ENCODE measurements at regions of chr19 and their contacts with region 1.

Region 1: GRCh38 chr19:13707915-13708314 is 56.4 kb upstream of the MRI1 start:
- DNase-seq: no peak
- H3K4me3 Mint-ChIP-seq: no peak overlapping the region
- H3K27ac Mint-ChIP-seq: no peak overlapping the region
- H3K4me1 Mint-ChIP-seq: peaks cover 4% of the 10 kb centered on the region
- H3K27me3 Mint-ChIP-seq: no peaks in the 10 kb centered on the region
- CTCF ChIP-seq: no peak

Region 2: DNA sequence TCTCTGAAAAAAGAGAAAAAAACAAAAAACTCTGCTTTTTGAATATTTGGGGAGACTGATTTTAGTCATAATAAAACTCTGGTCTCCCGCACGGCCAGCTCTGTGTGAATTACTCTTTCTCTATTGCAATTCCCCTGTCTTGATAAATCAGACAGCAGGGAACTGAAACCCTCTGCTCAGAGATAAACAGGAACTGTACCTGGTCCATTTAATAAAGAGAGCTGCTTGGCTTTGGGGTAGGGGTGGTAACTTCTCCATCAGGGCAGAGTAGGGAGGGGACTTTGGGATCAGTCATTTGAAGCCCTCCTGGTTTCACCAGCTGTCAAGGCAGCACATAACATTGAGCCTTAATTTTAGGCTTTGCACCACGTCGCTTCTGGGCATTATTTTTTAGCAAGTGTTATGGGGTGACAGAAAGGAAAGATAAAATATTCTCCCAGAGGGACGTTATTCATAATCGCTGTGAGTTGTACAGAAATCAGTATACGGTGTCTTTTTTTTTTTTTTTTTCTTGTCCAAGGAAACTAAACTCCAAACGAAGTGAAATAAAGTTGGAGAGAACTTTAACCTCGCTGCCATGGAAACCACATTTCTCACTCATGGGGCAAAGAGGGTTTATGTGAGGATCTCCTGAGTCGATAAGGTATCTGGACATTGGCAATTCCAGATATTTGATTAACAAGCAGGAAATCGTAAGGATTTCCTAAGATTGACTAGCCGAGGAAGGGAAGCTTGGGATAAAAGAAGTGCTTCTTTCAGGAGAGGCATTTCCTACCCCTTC is 42.6 kb before region 1 on chr19:
- CTCF ChIA-PET with region 1: no interaction called
- POLR2A ChIA-PET with region 1: interaction called, 10 read pairs
- intact Hi-C with region 1: no loop called
- DNase-seq: no peak
- H3K4me3 Mint-ChIP-seq: no peak overlapping the region
- H3K27ac Mint-ChIP-seq: no peak overlapping the region
- H3K4me1 Mint-ChIP-seq: no peaks in the 10 kb centered on the region
- H3K27me3 Mint-ChIP-seq: no peaks in the 10 kb centered on the region
- CTCF ChIP-seq: no peak

Region 3: GRCh38 chr19:13691569-13692435 is 16.1 kb before region 1 on chr19:
- CTCF ChIA-PET with region 1: interaction called, 3 read pairs
- POLR2A ChIA-PET with region 1: interaction called, 10 read pairs
- intact Hi-C with region 1: no loop called
- DNase-seq: peak; percentile 62
- H3K4me3 Mint-ChIP-seq: no peak overlapping the region
- H3K27ac Mint-ChIP-seq: peak overlapping the region; percentile 52
- H3K4me1 Mint-ChIP-seq: peaks cover 12% of the 10 kb centered on the region
- H3K27me3 Mint-ChIP-seq: no peaks in the 10 kb centered on the region
- CTCF ChIP-seq: no peak

Region 4: GRCh38 chr19:13817615-13818371 is 109.9 kb after region 1 on chr19:
- CTCF ChIA-PET with region 1: no interaction called
- POLR2A ChIA-PET with region 1: no interaction called
- intact Hi-C with region 1: no loop called
- DNase-seq: no peak
- H3K4me3 Mint-ChIP-seq: no peak overlapping the region
- H3K27ac Mint-ChIP-seq: no peak overlapping the region
- H3K4me1 Mint-ChIP-seq: peaks cover 11% of the 10 kb centered on the region
- H3K27me3 Mint-ChIP-seq: no peaks in the 10 kb centered on the region
- CTCF ChIP-seq: no peak

Region 5: DNA sequence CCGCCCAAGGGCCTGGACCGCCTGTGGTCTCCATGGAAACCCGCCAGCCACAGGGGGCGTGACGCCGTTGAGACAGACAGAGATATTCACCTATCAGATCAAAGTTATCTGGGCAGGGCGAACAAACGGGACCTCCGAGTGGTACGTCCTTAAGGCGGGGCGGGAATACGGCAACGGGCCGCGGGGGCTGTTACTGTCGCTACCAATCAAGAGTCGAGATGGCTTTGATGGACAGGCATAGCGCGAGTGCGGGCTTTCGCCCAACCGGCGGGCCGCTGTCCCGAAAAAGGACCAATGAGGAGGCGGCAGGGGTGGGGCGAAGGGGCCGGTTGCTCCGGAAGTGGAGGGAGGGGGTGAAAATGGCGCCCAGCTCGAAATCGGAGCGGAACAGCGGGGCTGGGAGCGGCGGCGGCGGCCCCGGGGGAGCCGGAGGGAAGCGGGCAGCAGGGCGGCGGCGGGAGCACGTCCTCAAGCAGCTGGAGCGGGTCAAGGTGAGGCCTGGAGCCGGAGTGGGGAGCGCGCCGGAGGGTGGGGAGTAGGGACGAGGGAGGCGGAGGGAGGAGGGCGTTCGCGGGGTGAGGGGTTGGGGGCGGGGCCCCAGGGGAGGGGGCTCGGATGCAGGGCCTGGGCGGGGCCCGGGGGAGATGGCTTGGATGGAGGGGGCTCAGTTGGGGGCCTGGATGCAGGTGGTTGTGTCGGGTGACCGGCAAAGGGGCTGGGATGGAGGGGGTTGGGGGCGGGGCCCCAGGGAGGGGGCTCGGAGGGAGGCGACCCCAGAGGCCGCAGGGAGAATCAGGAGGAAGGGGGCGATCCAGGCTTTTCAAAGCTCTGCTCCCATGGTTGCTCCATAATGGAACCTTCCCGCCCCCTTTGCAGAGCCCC is 244.5 kb after region 1 on chr19 and contains the start of gene DCAF15:
- CTCF ChIA-PET with region 1: no interaction called
- POLR2A ChIA-PET with region 1: no interaction called
- intact Hi-C with region 1: no loop called
- DNase-seq: peak; percentile 100
- H3K4me3 Mint-ChIP-seq: peak within 1 kb of the TSS; percentile 89
- H3K27ac Mint-ChIP-seq: peak within 1 kb of the TSS; percentile 63
- H3K4me1 Mint-ChIP-seq: peaks cover 9% of the 10 kb centered on the region
- H3K27me3 Mint-ChIP-seq: no peaks in the 10 kb centered on the region
- CTCF ChIP-seq: no peak
- total RNA-seq, gene DCAF15: 17.6 and 19.3 TPM in 2 replicates